GM12878 (cell line): ENCODE measurements at regions of chr10 and their contacts with region 1.

Region 1: GRCh38 chr10:100670828-100671479 is 74.4 kb upstream of the PAX2 start:
- DNase-seq: no peak
- ATAC-seq: peak; percentile 100
- H3K4me3 ChIP-seq: no peak overlapping the region
- H3K27ac ChIP-seq: no peak overlapping the region
- H3K4me1 ChIP-seq: no peaks in the 10 kb centered on the region
- H3K27me3 ChIP-seq: peaks cover 7 to 16% of the 10 kb centered on the region in 2 experiments
- CTCF ChIP-seq: peak; percentile 62 to 75 (median 66); a peak in 5 of 6 replicates
- EP300 ChIP-seq: no peak
- POLR2A ChIP-seq: no peak
- RAD21 ChIP-seq: peak; percentile 50

Region 2: GRCh38 chr10:100286051-100287033 is 384.6 kb before region 1 on chr10 and contains the start of gene BLOC1S2:
- CTCF ChIA-PET with region 1: no interaction called
- POLR2A ChIA-PET with region 1: no interaction called
- RAD21 ChIA-PET with region 1: no interaction called
- SMC1A ChIA-PET with region 1: no interaction called
- in situ Hi-C with region 1: no loop called
- intact Hi-C with region 1: no loop called
- DNase-seq: peak; percentile 61
- ATAC-seq: peak; percentile 97
- H3K4me3 ChIP-seq: peak within 1 kb of the TSS; percentile 92
- H3K27ac ChIP-seq: peak within 1 kb of the TSS; percentile 92
- H3K4me1 ChIP-seq: peaks cover 8% of the 10 kb centered on the region; the same call in 1 of the 2 replicates
- H3K27me3 ChIP-seq: no peaks in the 10 kb centered on the region
- CTCF ChIP-seq: 0 out of 6 replicates have a peak, but pooled peaks of 1 of the 3 experiments have one; percentile 4
- EP300 ChIP-seq: no peak
- POLR2A ChIP-seq: peak; percentile 98
- RAD21 ChIP-seq: no peak
- polyA plus RNA-seq, gene BLOC1S2: 106 to 120 TPM

Region 3: GRCh38 chr10:100562008-100562711 is 108.8 kb before region 1 on chr10:
- CTCF ChIA-PET with region 1: no interaction called
- POLR2A ChIA-PET with region 1: no interaction called
- RAD21 ChIA-PET with region 1: no interaction called
- SMC1A ChIA-PET with region 1: no interaction called
- in situ Hi-C with region 1: no loop called
- intact Hi-C with region 1: loop called (anchors 5 kb)
- DNase-seq: peak; percentile 16
- ATAC-seq: peak; percentile 95
- H3K4me3 ChIP-seq: no peak overlapping the region
- H3K27ac ChIP-seq: no peak overlapping the region
- H3K4me1 ChIP-seq: no peaks in the 10 kb centered on the region
- H3K27me3 ChIP-seq: peaks cover 0 to under 1% of the 10 kb centered on the region in 2 experiments; a peak in 1 of 4 replicates
- CTCF ChIP-seq: peak; percentile 89 to 95 (median 92)
- EP300 ChIP-seq: no peak
- POLR2A ChIP-seq: no peak; the same call in 1 of the 2 replicates
- RAD21 ChIP-seq: peak; percentile 93

Region 4: GRCh38 chr10:100743626-100744135 is 72.7 kb after region 1 on chr10:
- CTCF ChIA-PET with region 1: interaction called, 23 read pairs
- POLR2A ChIA-PET with region 1: no interaction called
- RAD21 ChIA-PET with region 1: interaction called, 3 read pairs
- SMC1A ChIA-PET with region 1: interaction called, 3 read pairs
- in situ Hi-C with region 1: loop called (anchors 5 kb)
- intact Hi-C with region 1: loop called (anchors 1 kb)
- DNase-seq: no peak
- ATAC-seq: peak; percentile 91
- H3K4me3 ChIP-seq: no peak overlapping the region
- H3K27ac ChIP-seq: no peak overlapping the region
- H3K4me1 ChIP-seq: no peaks in the 10 kb centered on the region
- H3K27me3 ChIP-seq: peaks cover 34 to 44% of the 10 kb centered on the region in 2 experiments
- CTCF ChIP-seq: peak; percentile 81 to 82 (median 81)
- EP300 ChIP-seq: no peak
- POLR2A ChIP-seq: no peak
- RAD21 ChIP-seq: peak; percentile 76

Region 5: DNA sequence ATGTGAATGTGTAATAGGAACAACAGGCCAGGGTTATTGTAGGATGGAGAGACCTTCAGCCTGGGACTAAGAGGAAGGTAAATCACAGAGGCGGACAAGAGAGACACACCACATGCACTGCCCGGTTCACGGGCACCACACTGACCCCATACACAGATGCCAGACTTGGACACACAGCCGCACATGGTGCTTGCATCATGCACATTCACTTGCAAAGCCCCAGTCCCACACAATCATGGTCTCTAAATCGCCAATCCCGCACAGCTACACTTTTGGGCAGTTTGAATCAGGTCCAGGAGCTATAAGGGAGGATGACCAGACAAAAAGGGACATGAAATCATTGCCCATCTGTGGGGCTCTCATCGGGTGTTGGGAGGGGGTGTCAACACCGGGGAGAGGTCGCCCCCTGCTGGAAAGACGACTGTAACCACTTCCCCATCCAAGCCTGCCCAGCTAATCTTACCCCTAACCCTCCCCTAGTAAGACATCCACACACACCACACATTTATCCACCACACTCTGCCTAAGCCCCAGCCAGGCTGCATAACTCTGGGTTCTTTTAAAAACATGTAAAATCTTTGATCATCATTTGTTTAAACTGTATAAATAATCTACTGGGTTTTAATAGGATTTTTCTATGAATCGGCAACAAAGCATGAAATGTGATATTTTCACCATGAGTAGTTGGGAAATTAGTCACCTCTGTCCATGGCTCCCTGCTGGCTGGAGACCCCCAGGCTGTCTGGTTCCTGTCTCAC is 201.3 kb after region 1 on chr10:
- CTCF ChIA-PET with region 1: interaction called, 3 read pairs
- POLR2A ChIA-PET with region 1: no interaction called
- RAD21 ChIA-PET with region 1: no interaction called
- SMC1A ChIA-PET with region 1: no interaction called
- in situ Hi-C with region 1: loop called (anchors 5 kb)
- intact Hi-C with region 1: loop called (anchors 1 kb)
- DNase-seq: no peak
- ATAC-seq: peak; percentile 96
- H3K4me3 ChIP-seq: no peak overlapping the region
- H3K27ac ChIP-seq: no peak overlapping the region
- H3K4me1 ChIP-seq: no peaks in the 10 kb centered on the region
- H3K27me3 ChIP-seq: peaks cover 0 to 2% of the 10 kb centered on the region in 2 experiments; a peak in 1 of 4 replicates
- CTCF ChIP-seq: peak; percentile 64 to 66 (median 65)
- EP300 ChIP-seq: no peak
- POLR2A ChIP-seq: no peak
- RAD21 ChIP-seq: peak; percentile 48